Transverse colon (tissue), 4 donors: ENCODE measurements at regions of chr14 and their contacts with region 1.

Region 1: DNA sequence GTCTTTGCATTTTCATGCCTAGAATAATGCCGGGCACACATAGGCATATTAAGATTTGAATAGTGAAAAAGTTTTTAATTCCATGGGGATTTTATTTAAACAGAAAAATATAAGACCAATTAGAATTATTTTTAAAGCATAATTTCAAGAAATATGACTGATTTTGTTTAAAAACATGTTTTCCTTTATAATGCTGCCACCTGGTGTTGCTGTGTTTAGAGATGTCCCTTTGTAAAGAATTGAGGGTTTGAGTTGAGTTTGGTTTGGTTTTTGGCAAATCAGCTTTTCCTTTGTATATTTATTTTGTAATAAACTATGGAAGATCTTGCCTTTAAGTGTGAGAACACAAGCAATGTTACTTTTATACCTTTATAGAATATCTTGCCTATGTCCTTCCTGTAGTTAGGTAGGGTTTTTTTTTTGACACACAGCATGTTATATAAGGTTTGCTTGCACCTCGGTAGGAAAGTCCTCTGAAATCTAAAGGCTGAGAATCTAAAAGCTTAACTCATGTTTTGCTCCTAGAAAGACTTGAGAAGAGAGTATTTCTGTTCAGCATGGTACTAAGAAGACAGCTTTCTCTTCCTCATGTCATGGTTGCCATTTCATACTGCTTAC is 31.4 kb upstream of the SNAPC1 start:
- DNase-seq: no peak
- H3K4me3 ChIP-seq: no peak overlapping the region
- H3K27ac ChIP-seq: no peak overlapping the region
- H3K4me1 ChIP-seq: peaks cover 0 to 20% (median 2%) of the 10 kb centered on the region in 4 donors
- H3K27me3 ChIP-seq: no peaks in the 10 kb centered on the region
- CTCF ChIP-seq: peak; percentile 39 to 60 (median 43)
- EP300 ChIP-seq: no peak
- POLR2A ChIP-seq: no peak

Region 2: GRCh38 chr14:61296719-61297502 is 434.0 kb before region 1 on chr14:
- in situ Hi-C with region 1: loop called in 2 of 4 experiments (anchors 25 kb)
- intact Hi-C with region 1: no loop called
- DNase-seq: no peak
- H3K4me3 ChIP-seq: no peak overlapping the region
- H3K27ac ChIP-seq: no peak overlapping the region
- H3K4me1 ChIP-seq: peaks cover 4 to 10% (median 7%) of the 10 kb centered on the region in 4 donors
- H3K27me3 ChIP-seq: no peaks in the 10 kb centered on the region
- CTCF ChIP-seq: peak; percentile 30 to 55 (median 53)
- EP300 ChIP-seq: no peak
- POLR2A ChIP-seq: no peak

Region 3: GRCh38 chr14:61992139-61992538 is 261.3 kb after region 1 on chr14:
- in situ Hi-C with region 1: no loop called
- intact Hi-C with region 1: no loop called
- DNase-seq: peak; percentile 39
- H3K4me3 ChIP-seq: no peak overlapping the region
- H3K27ac ChIP-seq: no peak overlapping the region
- H3K4me1 ChIP-seq: peaks cover 0 to 5% (median 2%) of the 10 kb centered on the region in 4 donors
- H3K27me3 ChIP-seq: no peaks in the 10 kb centered on the region
- CTCF ChIP-seq: no peak
- EP300 ChIP-seq: no peak
- POLR2A ChIP-seq: no peak